ENCODE measurements at regions of chr2 and their contacts with region 1.

Region 1: GRCh38 chr2:231514103-231514950 is 15.9 kb downstream of the NMUR1 start:
- DNase-seq: peak; percentile 99
- ATAC-seq: peak; percentile 100

Region 2: GRCh38 chr2:231463698-231464575 is 50.4 kb before region 1 on chr2 and contains the start of gene NCL:
- intact Hi-C with region 1: loop called (anchors 5 kb)
- DNase-seq: peak; percentile 80
- ATAC-seq: peak; percentile 73
- total RNA-seq, gene NCL: 218 TPM

Region 3: GRCh38 chr2:231604685-231605606 is 90.6 kb after region 1 on chr2:
- intact Hi-C with region 1: loop called (anchors 5 kb)
- DNase-seq: peak; percentile 100
- ATAC-seq: peak; percentile 96